ENCODE measurements at regions of chr2 and their contacts with region 1.

Region 1: GRCh38 chr2:57497489-57498096 is 549.0 kb upstream of the VRK2 start:
- DNase-seq: peak; percentile 64
- H3K4me3 Mint-ChIP-seq: no peak overlapping the region
- H3K27ac Mint-ChIP-seq: no peak overlapping the region
- H3K4me1 Mint-ChIP-seq: no peaks in the 10 kb centered on the region
- H3K27me3 Mint-ChIP-seq: no peaks in the 10 kb centered on the region
- CTCF ChIP-seq: peak; percentile 59

Region 2: GRCh38 chr2:56981554-56981953 is 516.0 kb before region 1 on chr2:
- CTCF ChIA-PET with region 1: interaction called, 3 read pairs
- intact Hi-C with region 1: loop called (anchors 2 kb)
- DNase-seq: no peak
- H3K4me3 Mint-ChIP-seq: no peak overlapping the region
- H3K27ac Mint-ChIP-seq: no peak overlapping the region
- H3K4me1 Mint-ChIP-seq: no peaks in the 10 kb centered on the region
- H3K27me3 Mint-ChIP-seq: no peaks in the 10 kb centered on the region
- CTCF ChIP-seq: no peak

Region 3: GRCh38 chr2:57204364-57204763 is 293.2 kb before region 1 on chr2:
- CTCF ChIA-PET with region 1: no interaction called
- intact Hi-C with region 1: loop called (anchors 10 kb)
- DNase-seq: no peak
- H3K4me3 Mint-ChIP-seq: no peak overlapping the region
- H3K27ac Mint-ChIP-seq: no peak overlapping the region
- H3K4me1 Mint-ChIP-seq: no peaks in the 10 kb centered on the region
- H3K27me3 Mint-ChIP-seq: no peaks in the 10 kb centered on the region
- CTCF ChIP-seq: no peak

Region 4: GRCh38 chr2:57376985-57377384 is 120.6 kb before region 1 on chr2:
- CTCF ChIA-PET with region 1: no interaction called
- intact Hi-C with region 1: loop called (anchors 1 kb)
- DNase-seq: no peak
- H3K4me3 Mint-ChIP-seq: no peak overlapping the region
- H3K27ac Mint-ChIP-seq: no peak overlapping the region
- H3K4me1 Mint-ChIP-seq: peaks cover 28% of the 10 kb centered on the region
- H3K27me3 Mint-ChIP-seq: no peaks in the 10 kb centered on the region
- CTCF ChIP-seq: no peak